Dorsolateral prefrontal cortex (tissue), 120 donors: ENCODE measurements at regions of chr19 and their contacts with region 1.

Region 1: GRCh38 chr19:13033819-13034611 is 38.7 kb downstream of the NFIX start:
- DNase-seq: peak; percentile 68 to 97 (median 78)
- H3K4me3 ChIP-seq: peak overlapping the region in 47 of 59 donors; percentile 4 to 83 (median 28)
- H3K27ac ChIP-seq: peak overlapping the region; percentile 93 to 100 (median 99)
- H3K27me3 ChIP-seq: no peaks in the 10 kb centered on the region
- CTCF ChIP-seq: peak; percentile 48 to 89 (median 75)

Region 2: DNA sequence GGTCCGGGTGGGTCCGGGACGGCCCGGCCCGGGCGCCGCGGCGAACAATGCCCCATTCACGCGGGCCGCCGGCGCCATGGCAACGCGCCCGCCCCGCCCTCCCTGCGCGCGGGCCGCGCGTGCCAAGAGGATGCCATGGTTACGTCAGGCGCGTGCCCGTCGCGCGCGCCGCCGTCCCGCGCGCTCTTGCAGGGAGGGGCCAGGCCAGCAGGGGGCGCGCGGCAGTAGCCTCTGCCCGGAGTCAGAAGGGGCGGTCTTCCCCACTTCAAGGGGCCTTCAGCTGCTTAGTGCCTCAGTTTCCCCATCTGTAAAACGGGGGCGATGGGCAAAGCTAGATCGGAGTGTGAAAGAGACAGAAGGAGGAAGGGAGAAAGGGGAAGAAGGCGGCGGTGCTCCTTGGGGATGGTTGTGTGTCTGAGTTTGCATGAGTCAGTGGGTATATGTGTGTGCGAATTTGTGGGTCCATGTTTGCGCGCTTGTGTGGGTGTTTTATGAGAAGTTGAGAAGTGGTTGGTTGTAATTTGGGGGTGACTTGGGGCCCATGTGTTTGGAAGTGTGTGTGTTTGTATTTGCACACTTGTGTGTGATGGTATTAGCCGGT is 50.4 kb before region 1 on chr19:
- intact Hi-C with region 1: loop called (anchors 2 kb)
- DNase-seq: peak; percentile 74 to 90 (median 80)
- H3K4me3 ChIP-seq: peak overlapping the region in 54 of 59 donors; percentile 13 to 62 (median 44)
- H3K27ac ChIP-seq: peak overlapping the region in 56 of 59 donors; percentile 28 to 99 (median 94)
- H3K27me3 ChIP-seq: no peaks in the 10 kb centered on the region
- CTCF ChIP-seq: peak; percentile 75 to 99 (median 95)

Region 3: DNA sequence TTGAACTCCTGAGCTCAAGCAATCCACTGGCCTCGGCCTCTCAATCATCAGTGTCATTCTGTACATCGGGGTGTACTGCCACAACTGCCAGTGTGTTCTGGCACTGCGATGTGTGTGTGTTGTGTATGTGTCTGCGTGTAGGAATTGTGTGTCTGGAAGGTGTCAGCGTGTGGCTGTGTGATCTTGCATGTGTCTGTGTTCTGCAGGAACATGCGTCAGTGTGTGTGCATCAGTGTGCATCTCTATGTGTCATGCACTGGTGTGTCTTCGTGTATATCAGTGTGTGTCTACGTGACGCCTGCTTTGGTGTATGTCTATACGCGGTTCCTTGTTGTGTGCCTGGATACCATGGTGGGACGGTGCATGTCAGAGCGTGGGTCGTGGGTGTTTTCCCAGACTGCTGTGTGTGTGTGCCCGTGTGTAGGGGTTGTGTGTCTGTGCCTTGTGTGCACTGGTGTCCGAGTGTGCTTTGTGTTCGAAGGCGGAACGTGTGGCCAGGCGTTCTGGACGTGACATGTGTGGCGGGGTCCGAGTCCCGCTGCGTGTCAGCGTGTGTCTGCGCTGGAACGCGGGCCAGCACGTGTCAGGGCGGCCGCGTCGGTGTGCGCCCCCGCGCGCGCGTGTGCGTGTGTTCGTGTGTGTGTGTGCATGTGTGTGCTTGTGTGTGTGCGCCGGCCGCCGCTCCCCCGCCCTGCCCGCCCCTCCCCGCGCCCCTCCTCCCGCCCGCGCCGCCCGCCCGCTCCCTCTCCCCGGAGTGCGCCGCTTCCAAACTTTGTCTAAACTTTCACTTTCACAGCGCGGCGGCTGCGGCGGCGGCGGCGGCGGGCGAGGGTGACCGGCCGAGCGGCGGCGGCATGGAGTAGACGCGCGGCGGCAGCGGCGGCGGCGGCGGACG is 39.1 kb before region 1 on chr19 and contains the start of gene NFIX:
- intact Hi-C with region 1: loop called in 1 of 2 experiments (anchors 5 kb)
- DNase-seq: peak in 3 of 10 donors; percentile 42 to 68 (median 56)
- H3K4me3 ChIP-seq: peak within 1 kb of the TSS; percentile 59 to 84 (median 75)
- H3K27ac ChIP-seq: peak within 1 kb of the TSS; percentile 44 to 100 (median 93)
- H3K27me3 ChIP-seq: no peaks in the 10 kb centered on the region
- CTCF ChIP-seq: peak in 6 of 56 donors; percentile 9 to 19 (median 12)
- total RNA-seq, gene NFIX: 219 to 402 (median 309) TPM

Region 4: DNA sequence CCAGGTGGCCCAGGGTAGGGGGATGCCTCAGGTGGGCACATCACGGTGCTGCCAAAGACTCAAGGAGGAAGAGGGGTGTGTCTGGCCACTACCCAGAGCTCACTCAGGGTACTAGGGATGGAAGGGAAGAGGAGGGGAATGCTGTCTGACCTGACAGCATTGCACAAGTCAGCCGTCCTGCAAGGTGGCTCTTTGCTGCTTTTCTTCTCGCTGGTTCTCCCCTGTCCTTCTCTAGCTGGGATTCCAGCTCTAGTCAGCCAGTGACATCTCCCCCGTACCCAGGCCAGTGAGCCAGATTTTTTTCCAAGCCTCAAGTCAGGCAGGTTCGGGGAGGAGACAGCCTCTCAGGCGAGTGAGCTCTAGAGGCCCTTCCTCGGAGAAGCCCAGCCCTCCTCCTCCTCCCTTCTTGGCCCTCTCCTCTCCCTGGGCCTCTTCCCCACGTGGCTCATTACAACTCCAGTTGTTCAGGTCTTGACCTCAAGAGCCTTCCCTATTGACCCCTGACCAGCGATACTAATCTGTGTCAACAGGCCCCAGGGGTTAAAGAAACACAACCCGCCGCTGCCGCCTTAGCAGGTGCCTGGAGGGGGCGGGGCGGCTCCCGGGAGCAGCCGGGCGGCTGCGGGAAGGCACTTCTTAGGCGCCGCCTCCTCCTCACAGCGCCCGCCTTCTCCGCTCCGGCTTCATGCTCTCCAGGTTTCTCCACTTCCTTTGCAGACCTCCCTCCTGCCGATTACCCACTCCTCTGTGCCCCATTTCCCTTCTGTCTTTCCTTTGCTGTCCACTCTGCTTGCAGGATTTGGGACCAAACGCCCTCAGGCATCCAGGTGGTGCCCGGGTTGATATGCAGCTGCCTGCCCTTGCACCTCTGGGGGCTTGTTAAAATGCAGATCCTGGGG is 17.5 kb after region 1 on chr19:
- intact Hi-C with region 1: loop called in 1 of 2 experiments (anchors 2 kb)
- DNase-seq: peak in 2 of 10 donors; percentile 70 to 72
- H3K4me3 ChIP-seq: peak overlapping the region in 53 of 59 donors; percentile 1 to 50 (median 31)
- H3K27ac ChIP-seq: peak overlapping the region; percentile 43 to 100 (median 97)
- H3K27me3 ChIP-seq: no peaks in the 10 kb centered on the region
- CTCF ChIP-seq: peak in 7 of 56 donors; percentile 3 to 35 (median 21)

Region 5: DNA sequence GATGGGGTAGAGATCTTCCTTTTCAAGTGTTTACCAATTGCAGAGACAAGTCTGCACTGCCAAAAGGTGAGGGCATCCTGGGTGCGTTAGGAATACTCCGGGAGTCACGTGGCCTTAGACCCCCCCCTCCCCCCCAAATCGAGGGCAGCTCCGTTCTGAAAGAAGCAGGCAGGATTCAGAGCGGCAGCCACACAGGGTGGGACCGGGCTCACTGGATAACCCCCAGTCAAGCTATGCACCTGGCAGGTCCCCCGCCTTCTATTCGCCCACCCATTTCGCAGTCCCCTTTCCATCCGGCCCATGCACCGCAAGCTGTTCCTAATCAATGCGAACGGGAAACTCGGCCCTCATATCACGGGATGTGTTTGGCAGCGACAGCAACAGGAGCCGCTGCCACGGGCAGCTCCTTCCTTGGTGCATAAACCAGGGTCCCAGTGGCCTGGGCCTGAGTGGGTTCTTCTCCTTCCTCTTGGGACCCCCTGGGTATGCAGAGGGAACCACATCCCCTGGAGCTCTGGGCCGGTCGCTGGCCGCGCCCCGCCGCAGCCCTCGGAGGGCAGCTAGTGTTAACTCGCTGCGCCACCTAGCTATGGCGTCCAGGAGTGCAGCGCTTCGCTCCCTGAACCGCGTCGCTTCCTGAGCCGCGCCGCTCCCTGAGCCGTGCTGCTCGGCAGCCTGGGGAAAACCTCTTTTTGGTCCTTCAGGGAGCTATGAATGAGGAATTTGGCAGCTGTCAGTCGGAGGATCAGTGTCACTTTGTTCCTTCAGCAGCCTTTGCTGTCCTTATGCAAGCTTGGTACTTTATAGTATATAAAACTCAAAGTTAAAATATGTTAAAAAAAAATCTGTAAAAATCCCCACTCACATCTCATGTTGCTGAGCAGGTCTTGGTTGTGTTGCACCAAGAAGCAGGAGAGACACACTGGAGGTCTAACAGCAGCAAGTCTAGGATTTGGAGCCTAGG is 27.2 kb after region 1 on chr19:
- intact Hi-C with region 1: loop called (anchors 1 to 2 kb)
- DNase-seq: peak; percentile 80 to 92 (median 88)
- H3K4me3 ChIP-seq: peak overlapping the region; percentile 24 to 69 (median 55)
- H3K27ac ChIP-seq: peak overlapping the region; percentile 67 to 100 (median 98)
- H3K27me3 ChIP-seq: no peaks in the 10 kb centered on the region
- CTCF ChIP-seq: peak; percentile 91 to 99 (median 97)

Region 6: GRCh38 chr19:13072188-13072908 is 38.3 kb after region 1 on chr19:
- intact Hi-C with region 1: no loop called
- DNase-seq: peak in 9 of 10 donors; percentile 89 to 97 (median 95)
- H3K4me3 ChIP-seq: peak overlapping the region in 40 of 59 donors; percentile 3 to 56 (median 34)
- H3K27ac ChIP-seq: peak overlapping the region; percentile 76 to 100 (median 99)
- H3K27me3 ChIP-seq: no peaks in the 10 kb centered on the region
- CTCF ChIP-seq: peak in 11 of 56 donors; percentile 3 to 31 (median 16)

Region 7: DNA sequence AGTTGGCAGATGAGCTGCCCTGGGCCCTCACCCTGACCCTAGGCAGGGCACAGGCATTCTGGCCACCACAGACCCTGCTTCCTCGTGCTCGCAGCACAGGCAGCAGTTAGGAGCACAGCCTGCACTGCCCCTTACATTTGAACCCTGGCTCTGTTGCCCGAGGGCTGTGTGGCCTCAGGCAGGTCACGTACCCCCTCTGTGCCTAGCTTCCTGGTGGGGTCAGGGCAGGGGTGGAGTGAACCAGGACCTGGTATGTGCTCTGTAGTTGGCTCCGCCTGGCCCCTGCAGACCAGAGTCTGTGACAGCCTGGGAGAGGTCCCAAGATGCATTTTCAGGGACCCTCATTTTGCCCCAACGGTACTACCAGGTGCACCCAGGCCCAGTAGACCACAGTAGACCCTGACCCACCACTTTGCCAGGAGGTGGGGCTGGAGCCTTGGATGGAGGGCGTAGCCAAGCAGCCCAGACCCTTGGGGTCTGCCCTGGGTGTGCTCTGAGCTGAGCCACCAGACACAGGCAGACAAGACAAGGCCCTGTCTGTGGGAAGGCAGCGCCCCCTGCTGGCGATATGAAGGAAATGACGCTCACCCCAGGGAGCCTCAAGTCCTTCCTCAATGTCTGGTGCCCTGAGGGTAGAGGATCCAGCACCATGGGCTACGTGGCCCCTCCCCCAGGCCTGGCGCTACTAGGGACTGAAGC is 59.5 kb after region 1 on chr19:
- intact Hi-C with region 1: loop called (anchors 2 to 10 kb)
- DNase-seq: peak; percentile 82 to 92 (median 88)
- H3K4me3 ChIP-seq: no peak overlapping the region
- H3K27ac ChIP-seq: peak overlapping the region; percentile 35 to 100 (median 90)
- H3K27me3 ChIP-seq: no peaks in the 10 kb centered on the region
- CTCF ChIP-seq: peak; percentile 95 to 99 (median 98)